Mammary epithelial cell (primary cell): ENCODE measurements at regions of chr2 and their contacts with region 1.

Region 1: GRCh38 chr2:177888581-177888980 is 184.0 kb downstream of the PDE11A start:
- DNase-seq: no peak
- H3K4me3 ChIP-seq: no peak overlapping the region
- H3K27ac ChIP-seq: no peak overlapping the region
- H3K4me1 ChIP-seq: no peaks in the 10 kb centered on the region
- H3K27me3 ChIP-seq: no peaks in the 10 kb centered on the region
- CTCF ChIP-seq: no peak

Region 2: DNA sequence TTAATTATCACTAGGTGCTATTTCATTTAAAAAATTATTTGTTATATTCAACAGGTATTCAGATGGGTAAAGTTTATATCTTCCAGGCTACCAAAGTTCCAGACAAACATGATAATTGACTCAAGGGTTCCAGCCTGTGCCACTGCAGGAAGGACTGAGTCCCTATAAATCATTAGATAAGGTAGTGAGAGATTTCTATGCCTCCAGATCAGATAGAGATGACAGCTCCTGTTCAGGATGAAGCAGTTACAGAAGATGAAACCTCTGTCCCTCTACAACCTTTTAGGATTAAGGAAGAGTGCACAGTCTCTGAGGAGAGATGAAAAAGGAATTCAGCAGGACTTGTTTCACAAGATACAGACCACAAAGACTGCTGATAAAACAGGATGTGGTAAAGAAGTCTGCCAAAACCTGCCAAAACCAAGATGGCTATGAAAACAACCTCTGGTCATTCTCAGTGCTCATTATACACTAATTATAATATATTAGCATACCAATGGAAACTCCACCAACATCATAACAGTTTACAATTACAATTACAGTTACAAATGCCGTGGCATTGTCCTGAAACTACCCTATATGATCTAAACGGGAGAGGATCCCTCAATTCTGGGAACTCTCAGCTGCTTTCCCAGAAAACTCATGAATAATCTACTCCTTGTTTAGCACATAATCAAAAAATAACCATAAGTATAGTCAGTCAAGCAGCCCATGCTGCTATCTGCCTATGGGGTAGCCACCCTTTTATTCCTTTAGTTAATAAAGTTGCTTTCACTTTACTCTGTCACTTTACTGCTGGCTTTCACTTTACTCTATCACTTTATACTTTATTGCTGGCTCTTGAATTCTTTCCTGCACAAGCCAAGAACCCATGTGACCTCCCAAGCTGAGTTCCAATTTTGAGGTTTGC is 104.5 kb before region 1 on chr2:
- CTCF ChIA-PET with region 1: no interaction called
- dilution Hi-C with region 1: no loop called
- in situ Hi-C with region 1: no loop called
- intact Hi-C with region 1: loop called (anchors 10 kb)
- DNase-seq: peak; percentile 74
- H3K4me3 ChIP-seq: peak overlapping the region in 2 of 3 experiments; percentile 2 to 30
- H3K27ac ChIP-seq: peak overlapping the region; percentile 36
- H3K4me1 ChIP-seq: peaks cover 30% of the 10 kb centered on the region
- H3K27me3 ChIP-seq: no peaks in the 10 kb centered on the region
- CTCF ChIP-seq: no peak

Region 3: GRCh38 chr2:177799531-177799930 is 89.0 kb before region 1 on chr2:
- CTCF ChIA-PET with region 1: interaction called, 12 read pairs
- dilution Hi-C with region 1: no loop called
- in situ Hi-C with region 1: no loop called
- intact Hi-C with region 1: no loop called
- DNase-seq: no peak
- H3K4me3 ChIP-seq: no peak overlapping the region
- H3K27ac ChIP-seq: no peak overlapping the region
- H3K4me1 ChIP-seq: no peaks in the 10 kb centered on the region
- H3K27me3 ChIP-seq: peaks cover 5% of the 10 kb centered on the region
- CTCF ChIP-seq: peak; percentile 53 to 81

Region 4: DNA sequence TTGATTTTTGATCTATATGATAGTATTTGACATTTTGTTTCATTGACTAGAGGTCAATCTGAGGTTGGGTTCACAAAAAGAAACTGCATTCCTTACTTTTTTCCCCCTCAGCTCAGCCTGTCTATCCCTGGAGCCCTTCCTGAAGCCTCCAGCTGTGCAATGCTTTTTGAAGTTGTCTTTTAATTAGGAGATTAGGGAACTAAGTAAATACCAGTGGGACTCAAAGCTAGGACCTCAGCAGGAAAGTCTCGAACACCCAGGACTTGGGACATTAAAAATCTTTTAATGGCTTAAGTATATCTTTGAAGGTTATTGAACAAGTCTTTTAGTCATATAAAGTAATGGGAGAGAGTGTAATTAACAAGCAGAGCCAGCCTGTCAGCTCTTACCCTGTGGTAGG is 36.2 kb before region 1 on chr2:
- CTCF ChIA-PET with region 1: no interaction called
- dilution Hi-C with region 1: no loop called
- in situ Hi-C with region 1: no loop called
- intact Hi-C with region 1: loop called (anchors 2 kb)
- DNase-seq: no peak
- H3K4me3 ChIP-seq: no peak overlapping the region
- H3K27ac ChIP-seq: no peak overlapping the region
- H3K4me1 ChIP-seq: no peaks in the 10 kb centered on the region
- H3K27me3 ChIP-seq: no peaks in the 10 kb centered on the region
- CTCF ChIP-seq: no peak